ENCODE measurements at regions of chr16 and their contacts with region 1.

Region 1: GRCh38 chr16:17476414-17477270 is 5.9 kb upstream of the XYLT1 start:
- DNase-seq: no peak
- ATAC-seq: no peak
- H3K4me3 ChIP-seq: no peak overlapping the region
- H3K27ac ChIP-seq: no peak overlapping the region
- H3K4me1 ChIP-seq: no peaks in the 10 kb centered on the region
- H3K27me3 ChIP-seq: peaks cover 0 to 5% (median 0%) of the 10 kb centered on the region in 3 donors
- CTCF ChIP-seq: peak in 1 of 5 experiments; percentile 40
- POLR2A ChIP-seq: no peak

Region 2: GRCh38 chr16:17389384-17389783 is 87.3 kb before region 1 on chr16:
- in situ Hi-C with region 1: no loop called
- intact Hi-C with region 1: no loop called
- DNase-seq: no peak
- ATAC-seq: no peak
- H3K4me3 ChIP-seq: no peak overlapping the region
- H3K27ac ChIP-seq: no peak overlapping the region
- H3K4me1 ChIP-seq: no peaks in the 10 kb centered on the region
- H3K27me3 ChIP-seq: no peaks in the 10 kb centered on the region
- CTCF ChIP-seq: no peak
- POLR2A ChIP-seq: no peak

Region 3: GRCh38 chr16:17970816-17971331 is 494.2 kb after region 1 on chr16:
- in situ Hi-C with region 1: no loop called
- intact Hi-C with region 1: loop called (anchors 10 kb)
- DNase-seq: peak; percentile 24 to 67
- ATAC-seq: peak; percentile 70 to 74
- H3K4me3 ChIP-seq: no peak overlapping the region
- H3K27ac ChIP-seq: peak overlapping the region; percentile 13 to 54 (median 32)
- H3K4me1 ChIP-seq: no peaks in the 10 kb centered on the region
- H3K27me3 ChIP-seq: peaks cover 0 to 5% (median 4%) of the 10 kb centered on the region in 3 donors
- CTCF ChIP-seq: no peak
- POLR2A ChIP-seq: no peak